A549 (cell line): ENCODE measurements at regions of chrX and their contacts with region 1.

Region 1: DNA sequence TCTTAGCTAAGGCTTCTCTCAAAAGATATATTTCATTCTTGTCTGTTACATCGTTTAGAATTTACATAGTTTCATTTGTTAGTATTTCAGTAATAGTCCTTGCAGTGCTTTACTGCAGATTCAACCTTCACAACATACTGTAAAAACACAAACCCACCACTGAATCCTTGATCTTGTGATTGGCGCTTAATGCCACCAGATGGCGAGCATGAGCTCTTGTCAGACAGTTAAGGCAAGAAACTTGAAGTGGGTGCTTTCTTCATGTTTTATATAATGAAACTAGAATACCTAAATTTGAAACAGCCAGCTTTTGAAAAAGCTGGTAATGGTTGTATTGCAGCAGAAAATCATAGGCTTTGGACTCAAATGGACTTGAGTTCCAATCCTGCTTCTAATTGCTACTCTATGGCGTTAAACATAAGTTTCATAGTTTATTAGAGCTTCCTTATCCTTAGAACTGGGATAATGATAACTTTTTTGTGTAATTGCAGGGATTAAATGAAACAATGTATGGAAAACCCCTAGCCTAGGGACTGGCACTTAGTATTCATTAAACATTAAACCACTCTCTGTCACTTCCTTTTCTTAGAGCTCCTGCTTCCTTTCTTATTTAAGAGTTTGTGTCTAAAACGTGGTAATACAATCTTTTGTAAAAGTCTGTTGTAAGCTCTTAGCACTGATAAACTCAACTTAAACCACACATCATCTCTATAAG is 95.1 kb downstream of the USP9X start:
- DNase-seq: peak; percentile 34 to 73
- ATAC-seq: peak; percentile 85 to 89; a peak in 5 of 6 replicates
- H3K4me3 ChIP-seq: no peak overlapping the region
- H3K27ac ChIP-seq: no peak overlapping the region
- H3K4me1 ChIP-seq: peaks cover 8% of the 10 kb centered on the region; the same call in 2 of the 3 replicates
- CTCF ChIP-seq: peak; percentile 58
- EP300 ChIP-seq: no peak
- POLR2A ChIP-seq: no peak
- RAD21 ChIP-seq: peak; percentile 35 to 62; a peak in 3 of 5 replicates

Region 2: DNA sequence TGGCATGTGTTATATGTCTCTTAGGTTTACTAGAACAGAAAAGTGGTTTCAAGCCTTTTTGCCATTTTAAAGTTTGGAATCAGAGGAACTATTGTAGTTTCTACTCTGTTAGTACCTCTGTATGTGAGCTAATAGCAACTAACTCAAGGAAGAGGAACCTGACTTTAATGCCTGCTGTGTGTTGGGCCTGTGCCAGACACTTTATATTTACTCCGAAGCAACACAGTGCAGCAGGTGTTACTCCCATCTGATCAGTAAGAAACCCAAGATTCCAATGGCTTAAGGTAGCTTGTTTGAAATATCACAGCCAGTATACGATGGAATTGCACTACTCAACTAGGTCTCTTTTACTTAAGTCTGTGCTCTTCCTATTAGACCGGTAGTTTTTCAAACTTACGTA is 15.9 kb before region 1 on chrX:
- CTCF ChIA-PET with region 1: interaction called, 14 read pairs
- POLR2A ChIA-PET with region 1: no interaction called
- DNase-seq: no peak
- ATAC-seq: no peak
- H3K4me3 ChIP-seq: no peak overlapping the region
- H3K27ac ChIP-seq: no peak overlapping the region
- H3K4me1 ChIP-seq: peaks cover 5% of the 10 kb centered on the region; the same call in 2 of the 3 replicates
- CTCF ChIP-seq: no peak
- EP300 ChIP-seq: no peak
- POLR2A ChIP-seq: no peak
- RAD21 ChIP-seq: no peak

Region 3: GRCh38 chrX:41192880-41193279 is 12.5 kb after region 1 on chrX:
- CTCF ChIA-PET with region 1: interaction called, 14 read pairs
- POLR2A ChIA-PET with region 1: no interaction called
- DNase-seq: no peak
- ATAC-seq: no peak
- H3K4me3 ChIP-seq: no peak overlapping the region
- H3K27ac ChIP-seq: peak overlapping the region; percentile 3 to 68; a peak in 5 of 6 replicates
- H3K4me1 ChIP-seq: no peaks in the 10 kb centered on the region
- CTCF ChIP-seq: no peak
- EP300 ChIP-seq: no peak
- POLR2A ChIP-seq: no peak
- RAD21 ChIP-seq: no peak

Region 4: GRCh38 chrX:41200785-41201184 is 20.4 kb after region 1 on chrX:
- CTCF ChIA-PET with region 1: interaction called, 23 read pairs
- POLR2A ChIA-PET with region 1: no interaction called
- DNase-seq: no peak
- ATAC-seq: no peak
- H3K4me3 ChIP-seq: no peak overlapping the region
- H3K27ac ChIP-seq: no peak overlapping the region
- H3K4me1 ChIP-seq: no peaks in the 10 kb centered on the region
- CTCF ChIP-seq: no peak
- EP300 ChIP-seq: no peak
- POLR2A ChIP-seq: no peak
- RAD21 ChIP-seq: no peak